ENCODE measurements at regions of chr11 and their contacts with region 1.

Region 1: DNA sequence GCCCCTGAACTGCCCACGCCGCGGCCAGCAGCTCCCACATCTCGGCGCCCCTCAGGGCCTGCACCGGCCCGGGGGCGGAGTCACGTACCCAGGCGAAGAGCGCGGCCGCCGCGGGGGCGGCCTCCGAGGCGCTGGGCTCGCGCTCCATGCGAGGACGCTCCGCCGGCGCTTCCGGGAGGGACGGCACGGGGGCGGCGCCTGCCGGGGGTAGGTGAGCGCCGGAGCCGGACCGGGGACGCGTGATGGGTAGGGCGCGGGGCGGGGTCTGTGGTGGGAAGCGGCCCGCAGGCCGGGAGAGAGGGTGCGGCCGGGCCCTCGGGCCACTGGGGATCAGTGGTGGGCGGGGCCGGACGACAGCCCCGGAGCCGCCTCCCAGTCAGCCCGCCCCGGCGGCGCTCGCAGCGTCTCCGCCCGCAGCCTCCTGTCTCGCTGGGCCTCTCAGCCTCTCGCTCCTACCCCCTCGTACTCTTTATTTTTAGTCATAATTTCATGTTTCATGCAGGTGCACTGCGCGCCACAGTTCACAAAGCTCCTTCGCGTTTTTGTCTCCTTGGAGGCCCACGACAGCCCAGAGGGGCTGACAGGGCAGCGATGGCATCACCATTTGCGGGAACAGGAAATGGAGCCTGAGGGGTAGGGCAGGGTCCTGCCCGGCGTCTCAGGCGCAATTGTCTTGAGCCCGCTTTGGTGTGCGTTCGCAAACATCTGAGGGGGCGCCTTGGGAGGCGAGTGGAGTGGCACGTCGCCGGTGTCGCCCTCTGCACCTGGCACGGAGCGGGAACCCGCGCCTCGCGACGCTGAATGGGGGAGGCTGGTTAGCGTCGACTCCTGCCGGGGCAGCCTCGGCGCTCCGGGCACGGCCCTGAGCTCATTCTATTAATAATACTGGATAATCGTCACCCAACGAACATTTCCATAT is at the start of gene SERGEF:
- DNase-seq: peak; percentile 97
- ATAC-seq: peak; percentile 98
- total RNA-seq, gene SERGEF: 14.7 TPM

Region 2: DNA sequence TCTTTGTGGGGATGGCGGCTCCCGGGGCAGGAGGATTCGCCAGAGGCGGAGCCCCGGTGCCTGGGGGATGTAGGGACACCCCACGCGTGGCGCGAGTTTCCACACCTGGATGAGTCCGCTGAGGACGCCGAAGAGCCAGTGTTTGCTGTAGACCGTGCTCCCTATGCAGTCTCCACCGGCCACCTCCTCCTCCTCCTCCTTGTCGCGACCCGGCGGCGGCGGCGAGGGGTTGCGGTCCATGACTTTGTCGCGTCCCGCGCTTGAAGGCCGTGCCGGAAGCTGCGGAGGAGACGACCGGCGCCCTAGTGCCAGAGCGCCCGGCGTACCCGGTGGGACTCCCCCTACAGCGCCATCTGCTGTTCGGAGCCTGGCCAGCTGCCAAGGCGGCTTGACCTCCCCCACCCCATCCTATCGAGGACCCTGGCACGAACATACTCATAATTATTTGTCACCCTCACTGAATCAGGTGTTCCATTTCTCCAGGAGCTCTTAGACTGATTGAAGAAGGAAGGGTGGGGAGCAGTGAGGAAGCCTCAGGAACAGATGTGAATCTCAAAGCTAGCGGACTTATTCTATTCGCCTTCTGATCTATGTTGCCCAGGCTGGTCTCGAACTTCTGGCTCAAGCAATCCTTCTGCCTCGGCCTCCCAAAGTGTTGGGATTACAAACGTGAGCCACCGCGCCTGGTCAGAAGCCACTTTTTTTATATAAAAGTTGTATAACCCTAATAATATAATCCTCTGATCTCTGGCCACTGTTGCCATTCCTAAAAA is 92.9 kb after region 1 on chr11 and contains the start of gene SAAL1:
- intact Hi-C with region 1: loop called (anchors 10 kb)
- DNase-seq: peak; percentile 92
- ATAC-seq: peak; percentile 100
- total RNA-seq, gene SAAL1: 7.3 TPM

Measured in Right ventricle myocardium superior (tissue), 1 donor.